ENCODE measurements at regions of chr12 and their contacts with region 1.

Region 1: DNA sequence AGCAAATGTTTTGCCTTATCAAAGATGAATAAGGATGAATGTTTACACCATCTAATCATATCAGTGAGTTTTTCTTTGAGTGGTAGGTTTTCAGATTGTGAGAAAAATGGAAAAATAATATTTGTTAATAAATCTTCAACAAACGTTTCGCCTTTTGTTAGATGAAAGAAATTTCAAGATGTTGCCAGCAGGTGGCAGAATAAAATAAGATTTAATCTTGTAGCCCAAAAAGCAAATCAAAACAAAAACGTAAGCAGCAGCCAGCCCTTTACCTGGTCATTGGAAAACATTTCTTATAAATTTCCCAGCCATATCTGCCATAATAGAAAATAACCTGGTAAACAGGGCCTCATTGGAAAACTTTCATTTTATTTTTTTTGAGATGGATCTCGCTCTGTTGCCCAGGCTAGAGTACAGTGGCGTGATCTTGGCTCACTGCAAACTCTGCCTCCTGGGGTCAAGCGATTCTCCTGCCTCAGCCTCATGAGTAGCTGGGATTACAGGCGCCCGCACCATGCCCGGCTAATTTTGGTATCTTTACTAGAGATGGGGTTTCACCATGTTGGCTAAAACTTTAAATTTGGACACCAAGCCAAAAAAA is 15.4 kb upstream of the TMEM120B start:
- DNase-seq: peak in 5 of 42 donors; percentile 36 to 65 (median 52)

Region 2: DNA sequence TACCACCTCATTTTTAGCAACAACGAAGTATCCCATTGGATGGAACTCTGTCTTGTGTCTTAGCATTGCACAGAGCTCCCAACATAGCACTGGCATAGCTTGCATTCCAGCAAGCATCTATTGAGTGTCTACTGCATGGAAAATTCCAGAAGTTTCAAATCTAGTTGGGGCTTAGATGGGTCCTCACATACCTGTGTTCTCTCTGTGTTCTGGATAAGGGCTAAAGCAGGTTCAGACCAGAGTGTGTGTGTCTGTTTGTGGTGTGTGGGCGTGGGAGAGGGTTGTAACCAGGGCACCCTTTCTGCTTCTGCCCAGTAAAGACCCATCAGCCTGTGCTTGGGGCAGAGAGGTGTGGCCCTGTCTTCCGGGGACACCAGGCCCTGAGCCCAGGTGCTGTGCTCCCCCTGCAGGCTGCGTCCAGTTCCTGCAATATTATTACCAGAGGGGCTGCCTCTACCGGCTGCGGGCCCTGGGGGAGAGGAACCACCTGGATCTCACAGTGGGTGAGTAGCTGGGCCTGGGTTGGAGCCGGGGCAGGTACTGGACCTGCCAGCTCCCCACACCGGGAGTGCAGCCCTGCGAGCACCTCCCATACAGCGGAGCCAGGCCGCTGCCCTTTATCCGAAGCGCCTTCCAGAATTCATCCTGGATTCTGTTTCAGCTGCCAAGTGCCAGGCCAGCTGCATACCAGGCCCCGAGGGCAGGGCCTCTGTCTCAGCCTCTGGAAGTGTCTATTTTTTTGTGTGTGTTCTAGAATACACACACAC is 76.0 kb after region 1 on chr12:
- intact Hi-C with region 1: loop called (anchors 5 kb)
- DNase-seq: peak in 40 of 42 donors; percentile 44 to 87 (median 66)

Region 3: GRCh38 chr12:121793838-121794533 is 96.8 kb after region 1 on chr12:
- intact Hi-C with region 1: loop called (anchors 5 kb)
- DNase-seq: peak; percentile 68 to 95 (median 88)

Measured in head of caudate nucleus (tissue), 42 donors.